ENCODE measurements at regions of chr17 and their contacts with region 1.

Region 1: DNA sequence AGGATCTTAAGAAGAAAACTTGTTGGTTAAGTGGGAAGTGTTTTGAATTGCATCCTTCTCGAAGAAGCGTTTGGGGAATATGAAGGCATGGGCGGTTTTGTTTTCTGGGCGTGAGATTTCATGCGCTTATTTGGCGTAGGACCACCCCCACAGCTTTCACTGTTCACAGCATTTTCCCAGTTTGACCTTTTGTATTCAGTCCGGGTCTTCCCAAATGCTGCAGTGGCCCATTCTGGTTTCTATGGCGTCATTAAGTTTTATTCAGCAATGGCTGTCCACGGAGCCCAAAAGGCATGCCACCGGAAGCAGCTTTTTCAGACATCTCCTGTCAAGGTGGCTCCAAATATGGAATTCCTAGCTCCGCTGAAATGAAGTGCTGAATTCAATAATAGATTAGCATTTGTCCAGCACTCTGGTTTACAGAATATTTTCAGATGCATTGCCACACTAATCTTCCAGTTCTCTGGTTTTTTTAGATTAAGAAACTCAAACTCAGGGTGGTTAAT is 90.6 kb upstream of the FBXO47 start:
- DNase-seq: no peak
- H3K4me3 Mint-ChIP-seq: peak overlapping the region; percentile 77
- H3K27ac Mint-ChIP-seq: no peak overlapping the region
- H3K4me1 Mint-ChIP-seq: peaks cover 10% of the 10 kb centered on the region
- H3K27me3 Mint-ChIP-seq: no peaks in the 10 kb centered on the region

Region 2: DNA sequence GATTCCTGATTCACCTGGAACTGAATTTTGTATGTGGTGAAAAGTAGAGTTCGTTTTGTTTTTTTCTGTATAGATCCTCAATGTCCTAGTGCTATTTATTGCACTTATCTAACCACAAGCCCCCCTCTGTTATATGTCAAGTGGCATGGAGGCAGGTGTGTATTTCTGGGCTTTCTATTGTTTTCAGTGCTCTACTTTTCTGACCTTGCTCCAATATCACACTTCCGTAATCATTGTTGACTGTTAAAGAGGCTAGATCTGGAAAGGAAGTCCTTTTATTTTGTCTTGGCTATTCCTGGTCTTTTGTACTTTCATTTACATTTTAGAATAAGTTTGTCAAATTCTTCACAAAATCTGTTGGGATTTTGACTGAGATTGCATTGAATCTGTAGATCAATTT is 63.7 kb before region 1 on chr17:
- CTCF ChIA-PET with region 1: no interaction called
- POLR2A ChIA-PET with region 1: no interaction called
- intact Hi-C with region 1: loop called (anchors 10 kb)
- DNase-seq: no peak
- H3K4me3 Mint-ChIP-seq: no peak overlapping the region
- H3K27ac Mint-ChIP-seq: no peak overlapping the region
- H3K4me1 Mint-ChIP-seq: no peaks in the 10 kb centered on the region
- H3K27me3 Mint-ChIP-seq: peaks cover 1% of the 10 kb centered on the region

Measured in activated CD4-positive, alpha-beta memory T cell treated with anti-CD3 and anti-CD28 coated beads for 36 hours (primary cell).